Pancreas (tissue), 10 donors: ENCODE measurements at regions of chr2 and their contacts with region 1.

Region 1: DNA sequence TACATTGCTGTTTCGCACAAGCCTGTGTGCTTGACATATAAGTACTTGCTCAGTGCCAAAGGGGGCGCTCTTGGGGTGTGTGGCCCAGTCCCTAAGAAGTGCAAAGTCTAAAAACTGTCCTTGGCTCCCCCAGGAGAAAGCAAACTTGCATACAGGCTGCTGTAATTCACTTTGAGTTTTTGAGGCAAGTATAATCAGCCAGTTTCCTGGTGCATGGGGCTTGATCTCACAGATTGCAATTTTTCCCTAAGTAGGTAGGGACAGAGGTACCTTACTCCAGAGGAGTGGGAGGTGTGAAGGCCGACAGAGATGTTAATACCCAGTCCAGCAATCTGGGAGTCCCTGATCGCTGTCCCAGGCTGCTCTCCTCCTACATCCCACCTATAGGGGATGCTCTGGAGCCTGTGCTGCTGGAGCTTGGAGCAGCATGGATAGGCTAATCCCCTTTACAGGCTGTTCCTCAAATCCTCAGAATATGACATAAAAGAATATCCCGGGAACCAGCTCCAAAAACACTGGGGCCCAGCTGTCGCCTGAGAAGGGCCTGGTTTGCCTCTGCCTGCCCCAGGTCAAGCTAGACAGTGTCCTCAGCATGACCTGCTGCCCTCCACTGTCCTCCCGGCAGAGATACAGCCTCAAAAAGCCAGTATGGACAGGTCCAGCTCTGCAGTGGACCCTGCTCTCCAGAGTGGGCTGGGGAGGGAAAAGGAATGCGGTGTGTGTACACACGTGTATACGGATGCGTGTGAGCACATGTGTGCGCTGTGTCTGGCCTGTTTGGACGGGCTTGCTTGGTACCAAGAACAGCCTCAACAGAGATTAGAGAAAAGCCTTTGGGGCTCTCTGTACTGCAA is 136.5 kb upstream of the HAAO start:
- DNase-seq: peak in 3 of 6 donors; percentile 39 to 62 (median 48)
- ATAC-seq: peak in 2 of 4 donors; percentile 8 to 15
- H3K4me3 ChIP-seq: no peak overlapping the region
- H3K27ac ChIP-seq: peak overlapping the region; percentile 86 to 93 (median 88)
- H3K4me1 ChIP-seq: peaks cover 58 to 66% (median 65%) of the 10 kb centered on the region in 3 donors
- H3K27me3 ChIP-seq: no peaks in the 10 kb centered on the region
- CTCF ChIP-seq: peak in 2 of 4 donors; percentile 8 to 12

Region 2: DNA sequence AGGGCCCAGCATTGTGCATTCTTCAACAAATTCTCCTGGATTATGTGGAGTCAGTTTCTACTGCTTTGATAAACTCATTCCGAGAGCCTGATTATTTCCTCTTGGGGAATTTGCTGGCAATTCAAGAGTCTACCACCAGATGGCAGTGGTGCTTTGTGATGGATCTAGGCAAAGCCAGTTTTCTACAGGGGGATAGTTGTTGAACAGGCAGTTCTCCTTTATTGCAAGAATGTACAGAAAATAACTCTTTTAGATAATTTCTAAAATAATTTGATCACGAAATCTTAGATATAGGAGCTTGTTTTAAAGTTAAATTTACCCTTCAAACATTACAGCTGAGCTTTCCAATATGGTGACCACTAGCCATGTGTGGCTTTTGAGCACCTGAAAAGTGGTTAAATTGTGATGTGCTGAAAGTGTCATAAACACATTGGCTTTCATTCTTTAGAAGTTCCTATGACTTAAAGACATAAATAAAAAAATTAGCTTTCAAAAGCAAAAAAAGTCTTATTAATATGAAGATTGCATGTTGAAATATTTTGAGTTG is 69.8 kb before region 1 on chr2:
- intact Hi-C with region 1: loop called in 1 of 3 experiments (anchors 10 kb)
- DNase-seq: peak in 5 of 6 donors; percentile 38 to 80 (median 56)
- ATAC-seq: peak; percentile 66 to 91 (median 80)
- H3K4me3 ChIP-seq: no peak overlapping the region
- H3K27ac ChIP-seq: no peak overlapping the region
- H3K4me1 ChIP-seq: no peaks in the 10 kb centered on the region
- H3K27me3 ChIP-seq: no peaks in the 10 kb centered on the region
- CTCF ChIP-seq: peak; percentile 59 to 88 (median 78)

Region 3: GRCh38 chr2:43251171-43251731 is 322.3 kb after region 1 on chr2:
- intact Hi-C with region 1: no loop called
- DNase-seq: no peak
- ATAC-seq: peak in 3 of 4 donors; percentile 66 to 87 (median 74)
- H3K4me3 ChIP-seq: no peak overlapping the region
- H3K27ac ChIP-seq: peak overlapping the region in 3 of 4 donors; percentile 13 to 53 (median 25)
- H3K4me1 ChIP-seq: no peaks in the 10 kb centered on the region
- H3K27me3 ChIP-seq: no peaks in the 10 kb centered on the region
- CTCF ChIP-seq: no peak